IMR-90 (cell line): ENCODE measurements at regions of chr16 and their contacts with region 1.

Region 1: DNA sequence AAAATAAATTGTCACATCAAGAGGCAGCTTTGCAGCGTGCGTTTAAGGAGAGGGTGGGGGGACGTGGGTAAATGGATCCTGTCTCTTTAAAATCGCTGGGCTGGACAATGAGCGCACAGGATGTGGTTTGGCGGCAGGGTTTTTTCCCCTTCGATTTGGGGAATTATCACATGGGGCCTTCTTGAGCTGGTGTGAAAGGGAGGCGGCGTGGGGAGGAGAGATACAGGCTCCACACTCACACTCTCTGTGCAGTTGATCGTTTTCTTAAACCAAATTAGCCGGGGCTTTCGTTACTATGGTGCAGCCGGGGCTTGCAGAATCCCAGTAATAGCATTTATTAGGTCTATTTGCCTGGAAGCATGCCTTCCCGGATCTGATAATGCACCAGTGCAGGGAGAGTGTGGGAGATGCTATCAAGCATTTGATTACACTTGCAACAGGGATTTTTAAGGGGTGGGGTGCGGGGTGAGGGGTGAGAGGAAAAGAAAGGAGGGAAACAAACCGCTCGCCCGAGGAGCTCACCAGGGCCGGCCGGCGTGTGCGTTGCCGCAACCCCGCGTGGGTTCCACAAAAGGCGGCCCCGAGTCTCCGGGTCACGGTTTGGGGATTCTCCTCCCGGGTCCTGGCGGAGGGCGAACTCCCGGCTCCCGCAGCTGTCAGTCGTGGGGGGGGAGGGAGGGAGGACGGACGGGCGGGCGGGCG is 58.9 kb upstream of the GSE1 start:
- DNase-seq: peak; percentile 80
- ATAC-seq: peak; percentile 38
- H3K4me3 ChIP-seq: peak overlapping the region; percentile 93
- H3K27ac ChIP-seq: peak overlapping the region; percentile 75
- H3K4me1 ChIP-seq: peaks cover 10% of the 10 kb centered on the region
- H3K27me3 ChIP-seq: no peaks in the 10 kb centered on the region
- CTCF ChIP-seq: no peak
- POLR2A ChIP-seq: no peak
- RAD21 ChIP-seq: no peak

Region 2: DNA sequence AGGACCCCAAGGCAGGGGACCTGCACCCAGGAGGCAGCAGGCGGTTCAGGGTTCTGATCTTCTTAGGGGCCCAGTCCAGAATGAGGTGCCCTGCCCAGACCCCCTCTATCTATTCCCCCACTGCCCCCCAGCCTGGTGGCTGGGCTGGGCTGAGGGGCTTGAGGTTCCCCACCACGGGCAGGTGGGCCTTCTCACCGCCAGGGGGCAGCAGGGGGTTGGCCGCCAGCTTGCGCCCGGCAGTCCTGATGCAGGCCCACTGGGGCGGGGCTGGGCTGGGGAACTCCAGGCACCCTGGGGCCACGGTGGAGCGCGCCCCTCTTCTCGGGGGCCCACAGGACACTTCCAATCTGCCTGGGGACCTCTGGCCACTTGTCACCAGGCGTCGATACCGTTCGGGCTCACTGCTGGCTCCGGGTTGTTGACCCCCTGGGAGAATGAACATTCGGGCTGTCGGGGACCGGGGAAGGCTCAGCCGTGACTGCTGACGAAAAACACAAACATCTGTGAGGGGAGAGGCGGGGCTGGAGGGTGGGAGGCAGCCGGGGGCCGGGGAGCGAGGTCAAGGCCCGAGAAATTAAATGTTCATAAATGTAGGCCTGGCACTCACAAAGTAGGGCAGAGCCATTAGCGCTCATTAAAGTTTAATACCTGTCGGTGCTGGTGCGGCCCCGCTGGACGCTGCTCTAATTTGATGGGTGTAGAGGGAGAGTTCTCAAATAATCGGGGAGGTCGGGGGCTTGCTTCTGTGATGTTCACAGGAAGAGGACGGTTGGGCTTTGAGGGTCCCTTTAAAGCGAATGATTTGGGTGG is 160.4 kb before region 1 on chr16:
- CTCF ChIA-PET with region 1: no interaction called
- POLR2A ChIA-PET with region 1: interaction called, 4 read pairs
- dilution Hi-C with region 1: no loop called
- in situ Hi-C with region 1: no loop called
- intact Hi-C with region 1: loop called (anchors 10 kb)
- DNase-seq: peak; percentile 40
- ATAC-seq: no peak
- H3K4me3 ChIP-seq: no peak overlapping the region
- H3K27ac ChIP-seq: no peak overlapping the region
- H3K4me1 ChIP-seq: peaks cover 38% of the 10 kb centered on the region
- H3K27me3 ChIP-seq: no peaks in the 10 kb centered on the region
- CTCF ChIP-seq: peak; percentile 74
- POLR2A ChIP-seq: no peak
- RAD21 ChIP-seq: peak; percentile 61

Region 3: DNA sequence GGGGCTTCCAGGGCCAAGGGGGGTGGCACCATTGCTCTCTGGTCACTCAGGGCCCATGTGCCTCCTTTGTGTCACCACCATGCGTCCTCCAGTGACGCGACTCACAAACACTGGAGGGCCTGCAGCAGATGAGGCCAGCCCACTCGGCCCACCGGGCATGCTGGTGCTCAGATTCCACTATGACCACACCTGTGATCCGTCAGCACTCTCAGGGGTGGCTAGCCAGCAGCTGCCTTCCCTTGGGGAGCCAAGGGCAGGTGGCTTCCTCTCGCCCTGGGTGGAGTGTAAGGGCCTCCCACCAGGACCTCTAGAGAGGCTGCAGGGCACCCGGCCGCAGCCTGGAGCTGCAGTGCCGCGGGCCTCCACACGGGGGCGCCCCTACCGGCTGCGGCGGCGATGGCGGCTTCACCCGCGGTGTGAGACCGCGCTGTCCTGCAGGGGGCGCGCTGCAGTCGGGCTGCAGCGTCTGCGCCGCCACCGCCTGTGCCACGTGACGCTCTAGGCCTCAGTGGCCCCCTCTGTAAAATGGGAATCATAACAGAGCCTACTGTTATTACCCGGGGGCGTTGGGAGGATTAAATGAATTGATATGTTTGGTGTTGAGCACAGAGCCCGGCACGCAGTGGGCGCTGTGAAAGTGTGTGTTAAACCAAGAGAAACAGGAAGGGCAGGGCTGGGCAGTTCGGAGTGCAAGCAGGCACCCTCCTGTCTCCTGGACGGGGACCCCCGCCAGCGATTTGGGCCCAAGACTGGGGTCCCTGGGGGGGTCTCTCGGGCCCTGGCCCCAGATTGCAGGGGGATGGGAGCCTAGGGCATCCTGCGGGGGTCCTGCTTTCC is 133.5 kb before region 1 on chr16:
- CTCF ChIA-PET with region 1: no interaction called
- POLR2A ChIA-PET with region 1: no interaction called
- dilution Hi-C with region 1: no loop called
- in situ Hi-C with region 1: no loop called
- intact Hi-C with region 1: loop called (anchors 5 kb)
- DNase-seq: peak; percentile 20
- ATAC-seq: peak; percentile 84
- H3K4me3 ChIP-seq: no peak overlapping the region
- H3K27ac ChIP-seq: no peak overlapping the region
- H3K4me1 ChIP-seq: no peaks in the 10 kb centered on the region; the same call in 1 of the 2 replicates
- H3K27me3 ChIP-seq: no peaks in the 10 kb centered on the region
- CTCF ChIP-seq: peak; percentile 99
- POLR2A ChIP-seq: no peak; the same call in 1 of the 2 replicates
- RAD21 ChIP-seq: peak; percentile 82

Region 4: DNA sequence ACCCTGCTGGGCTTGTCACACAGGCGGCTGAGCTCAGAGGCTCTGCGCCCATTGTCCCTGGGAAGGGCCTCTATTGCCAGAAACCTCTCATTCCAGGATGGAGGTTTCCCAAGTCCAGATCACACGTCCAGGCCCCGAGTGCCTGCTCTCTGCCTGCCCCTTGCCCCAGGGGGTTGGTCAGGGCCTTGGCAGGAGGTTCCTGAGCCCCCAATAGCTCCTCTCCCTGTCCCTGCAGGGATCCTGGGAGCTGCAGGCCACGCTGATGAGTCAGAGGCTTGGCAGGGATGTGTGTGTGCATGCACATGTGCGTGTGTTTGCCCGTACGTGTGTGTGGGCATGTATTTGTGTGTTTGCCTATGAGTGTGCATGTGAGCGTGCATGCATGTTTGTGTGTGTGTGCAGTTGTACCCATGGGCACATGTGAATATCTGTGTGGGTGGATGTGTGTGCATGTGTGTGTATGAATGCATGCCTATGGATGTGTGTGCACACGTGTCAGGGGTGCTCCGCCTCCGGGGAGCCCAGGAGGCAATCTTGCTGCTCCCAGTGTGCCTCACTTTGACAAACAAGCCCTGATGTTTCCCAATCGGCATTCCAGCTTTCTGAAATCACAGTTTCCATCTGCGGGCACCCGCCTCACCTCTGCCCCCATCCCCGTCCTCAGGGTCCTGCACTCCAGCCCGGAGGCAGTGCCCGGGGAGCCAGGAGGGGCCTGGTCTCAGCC is 39.5 kb before region 1 on chr16:
- CTCF ChIA-PET with region 1: interaction called, 3 read pairs
- POLR2A ChIA-PET with region 1: interaction called, 3 read pairs
- dilution Hi-C with region 1: no loop called
- in situ Hi-C with region 1: no loop called
- intact Hi-C with region 1: loop called (anchors 1 kb)
- DNase-seq: peak; percentile 92
- ATAC-seq: peak; percentile 79
- H3K4me3 ChIP-seq: no peak overlapping the region
- H3K27ac ChIP-seq: peak overlapping the region; percentile 88
- H3K4me1 ChIP-seq: peaks cover 36% of the 10 kb centered on the region
- H3K27me3 ChIP-seq: no peaks in the 10 kb centered on the region
- CTCF ChIP-seq: no peak
- POLR2A ChIP-seq: no peak
- RAD21 ChIP-seq: no peak

Region 5: GRCh38 chr16:85675251-85675927 is 121.1 kb after region 1 on chr16:
- CTCF ChIA-PET with region 1: no interaction called
- POLR2A ChIA-PET with region 1: no interaction called
- dilution Hi-C with region 1: no loop called
- in situ Hi-C with region 1: no loop called
- intact Hi-C with region 1: no loop called
- DNase-seq: peak; percentile 56
- ATAC-seq: peak; percentile 53
- H3K4me3 ChIP-seq: no peak overlapping the region
- H3K27ac ChIP-seq: no peak overlapping the region
- H3K4me1 ChIP-seq: peaks cover 11% of the 10 kb centered on the region
- H3K27me3 ChIP-seq: no peaks in the 10 kb centered on the region
- CTCF ChIP-seq: peak; percentile 57
- POLR2A ChIP-seq: no peak
- RAD21 ChIP-seq: peak; percentile 48

Region 6: GRCh38 chr16:85986931-85987749 is 432.9 kb after region 1 on chr16:
- CTCF ChIA-PET with region 1: no interaction called
- POLR2A ChIA-PET with region 1: no interaction called
- dilution Hi-C with region 1: no loop called
- in situ Hi-C with region 1: no loop called
- intact Hi-C with region 1: no loop called
- DNase-seq: no peak
- ATAC-seq: peak; percentile 40
- H3K4me3 ChIP-seq: no peak overlapping the region
- H3K27ac ChIP-seq: no peak overlapping the region
- H3K4me1 ChIP-seq: no peaks in the 10 kb centered on the region
- H3K27me3 ChIP-seq: peaks cover 83% of the 10 kb centered on the region
- CTCF ChIP-seq: peak; percentile 24; the same call in 1 of the 2 replicates
- POLR2A ChIP-seq: no peak
- RAD21 ChIP-seq: peak; percentile 55